ENCODE measurements at regions of chr20 and their contacts with region 1.

Region 1: GRCh38 chr20:22586645-22587310 is 2.4 kb upstream of the FOXA2 start:
- DNase-seq: peak; percentile 78 to 83 (median 81)
- ATAC-seq: peak; percentile 31 to 60 (median 54)
- H3K4me3 ChIP-seq: peak overlapping the region; percentile 41 to 58 (median 57)
- H3K27ac ChIP-seq: peak overlapping the region in 2 of 3 donors; percentile 3 to 49
- H3K4me1 ChIP-seq: peaks cover 0 to 11% (median 5%) of the 10 kb centered on the region in 4 donors
- H3K27me3 ChIP-seq: no peaks in the 10 kb centered on the region
- CTCF ChIP-seq: peak; percentile 75 to 92 (median 86)
- POLR2A ChIP-seq: no peak

Region 2: GRCh38 chr20:22226849-22227700 is 359.7 kb before region 1 on chr20:
- intact Hi-C with region 1: no loop called
- DNase-seq: no peak
- ATAC-seq: no peak
- H3K4me3 ChIP-seq: no peak overlapping the region
- H3K27ac ChIP-seq: no peak overlapping the region
- H3K4me1 ChIP-seq: no peaks in the 10 kb centered on the region
- H3K27me3 ChIP-seq: no peaks in the 10 kb centered on the region
- CTCF ChIP-seq: no peak
- POLR2A ChIP-seq: no peak

Region 3: GRCh38 chr20:22462975-22463914 is 123.5 kb before region 1 on chr20:
- intact Hi-C with region 1: loop called (anchors 10 kb)
- DNase-seq: peak in 2 of 3 donors; percentile 50 to 54
- ATAC-seq: peak; percentile 32 to 55 (median 44)
- H3K4me3 ChIP-seq: no peak overlapping the region
- H3K27ac ChIP-seq: peak overlapping the region; percentile 68 to 93 (median 71)
- H3K4me1 ChIP-seq: peaks cover 0 to 77% (median 35%) of the 10 kb centered on the region in 4 donors
- H3K27me3 ChIP-seq: no peaks in the 10 kb centered on the region
- CTCF ChIP-seq: no peak
- POLR2A ChIP-seq: no peak

Region 4: GRCh38 chr20:22663528-22664025 is 76.8 kb after region 1 on chr20:
- intact Hi-C with region 1: no loop called
- DNase-seq: no peak
- ATAC-seq: no peak
- H3K4me3 ChIP-seq: no peak overlapping the region
- H3K27ac ChIP-seq: no peak overlapping the region
- H3K4me1 ChIP-seq: no peaks in the 10 kb centered on the region
- H3K27me3 ChIP-seq: no peaks in the 10 kb centered on the region
- CTCF ChIP-seq: no peak
- POLR2A ChIP-seq: no peak

Measured in right lobe of liver (tissue), 6 donors.